Activated naive CD4-positive, alpha-beta T cell treated with anti-CD3 and anti-CD28 coated beads, Interleukin-2, amount 10 ng/mL, durations not matched to agents 7 days and 5 days (primary cell): ENCODE measurements at regions of chr11 and their contacts with region 1.

Region 1: GRCh38 chr11:122808478-122808869 is 29.8 kb upstream of the CRTAM start:
- DNase-seq: no peak
- H3K4me3 Mint-ChIP-seq: no peak overlapping the region
- H3K27ac Mint-ChIP-seq: no peak overlapping the region
- H3K4me1 Mint-ChIP-seq: peaks cover 18% of the 10 kb centered on the region
- H3K27me3 Mint-ChIP-seq: no peaks in the 10 kb centered on the region

Region 2: GRCh38 chr11:122681735-122682134 is 126.7 kb before region 1 on chr11:
- CTCF ChIA-PET with region 1: no interaction called
- DNase-seq: no peak
- H3K4me3 Mint-ChIP-seq: no peak overlapping the region
- H3K27ac Mint-ChIP-seq: no peak overlapping the region
- H3K4me1 Mint-ChIP-seq: peaks cover 10% of the 10 kb centered on the region
- H3K27me3 Mint-ChIP-seq: no peaks in the 10 kb centered on the region

Region 3: GRCh38 chr11:122796128-122796717 is 12.3 kb before region 1 on chr11:
- CTCF ChIA-PET with region 1: interaction called, 36 read pairs
- DNase-seq: peak; percentile 79
- H3K4me3 Mint-ChIP-seq: no peak overlapping the region
- H3K27ac Mint-ChIP-seq: no peak overlapping the region
- H3K4me1 Mint-ChIP-seq: no peaks in the 10 kb centered on the region
- H3K27me3 Mint-ChIP-seq: no peaks in the 10 kb centered on the region

Region 4: DNA sequence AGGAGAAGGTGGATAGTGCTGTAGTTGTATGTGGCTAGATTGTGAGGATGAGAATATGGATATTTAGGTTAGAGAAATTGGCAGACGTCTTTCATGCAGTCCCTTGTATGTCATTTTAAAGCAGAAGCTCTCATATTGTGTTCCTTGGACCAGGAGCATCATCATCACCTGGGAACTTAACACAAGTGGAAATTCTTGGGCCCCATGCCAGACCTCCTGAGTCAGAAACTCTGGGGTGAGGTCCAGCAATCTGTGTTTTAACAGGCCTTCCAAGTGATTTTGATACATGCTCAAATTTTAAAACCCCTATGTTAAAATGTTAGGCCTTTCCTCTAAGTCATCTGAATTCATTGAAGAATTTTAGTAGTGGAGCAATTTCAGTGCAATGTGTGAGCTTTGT is 108.8 kb after region 1 on chr11:
- CTCF ChIA-PET with region 1: no interaction called
- DNase-seq: no peak
- H3K4me3 Mint-ChIP-seq: no peak overlapping the region
- H3K27ac Mint-ChIP-seq: no peak overlapping the region
- H3K4me1 Mint-ChIP-seq: no peaks in the 10 kb centered on the region
- H3K27me3 Mint-ChIP-seq: no peaks in the 10 kb centered on the region